BJ (cell line): ENCODE measurements at regions of chr19 and their contacts with region 1.

Region 1: DNA sequence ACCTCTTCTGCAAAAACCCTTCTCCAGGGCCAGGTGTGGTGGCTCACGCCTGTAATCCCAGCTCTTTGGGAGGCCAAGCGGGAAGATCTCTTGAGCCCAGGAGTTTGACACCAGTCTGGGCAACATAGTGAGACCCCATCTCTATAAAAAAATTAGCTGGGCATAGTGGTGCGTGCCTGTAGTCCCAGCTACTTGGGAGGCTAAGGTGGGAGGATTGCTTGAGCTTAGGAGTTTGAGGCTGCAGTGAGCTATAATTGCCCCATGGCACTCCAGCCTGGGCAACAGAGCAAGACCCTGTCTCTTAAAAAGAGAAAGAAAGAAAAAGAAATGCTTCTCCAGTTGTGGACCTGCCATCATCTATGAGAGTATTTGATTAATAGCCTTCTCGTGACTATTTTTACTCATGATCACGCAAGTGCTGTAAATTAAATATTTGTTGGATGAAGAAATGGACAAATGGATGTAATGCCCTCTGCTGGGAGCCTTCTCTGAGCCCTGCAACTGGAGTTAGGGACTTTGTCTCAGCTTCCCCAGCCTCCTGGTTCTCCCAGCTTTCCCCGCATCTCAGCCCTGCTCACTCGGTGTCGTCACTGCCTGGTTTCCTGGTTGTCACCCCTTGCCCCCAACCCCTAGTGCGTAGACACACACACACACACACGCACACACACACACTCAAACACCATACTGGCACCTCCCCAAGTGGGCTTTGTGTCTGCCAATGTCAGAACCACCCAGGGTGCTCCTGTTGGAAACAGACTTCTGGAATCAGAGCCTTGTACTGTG is 12.2 kb downstream of the WIZ start:
- DNase-seq: no peak
- H3K4me3 ChIP-seq: no peak overlapping the region
- H3K27me3 ChIP-seq: no peaks in the 10 kb centered on the region
- CTCF ChIP-seq: peak; percentile 37

Region 2: GRCh38 chr19:15402411-15403150 is 35.0 kb before region 1 on chr19:
- CTCF ChIA-PET with region 1: no interaction called
- POLR2A ChIA-PET with region 1: no interaction called
- DNase-seq: no peak
- H3K4me3 ChIP-seq: no peak overlapping the region
- H3K27me3 ChIP-seq: no peaks in the 10 kb centered on the region
- CTCF ChIP-seq: no peak

Region 3: GRCh38 chr19:15448778-15449619 is 11.5 kb after region 1 on chr19:
- CTCF ChIA-PET with region 1: interaction called, 10 read pairs
- POLR2A ChIA-PET with region 1: no interaction called
- DNase-seq: no peak
- H3K4me3 ChIP-seq: peak overlapping the region; percentile 56
- H3K27me3 ChIP-seq: no peaks in the 10 kb centered on the region
- CTCF ChIP-seq: no peak

Region 4: GRCh38 chr19:15525291-15525690 is 87.7 kb after region 1 on chr19:
- CTCF ChIA-PET with region 1: no interaction called
- POLR2A ChIA-PET with region 1: no interaction called
- DNase-seq: no peak
- H3K4me3 ChIP-seq: no peak overlapping the region
- H3K27me3 ChIP-seq: no peaks in the 10 kb centered on the region
- CTCF ChIP-seq: no peak